Ascending aorta (tissue), 2 donors: ENCODE measurements at regions of chr19 and their contacts with region 1.

Region 1: DNA sequence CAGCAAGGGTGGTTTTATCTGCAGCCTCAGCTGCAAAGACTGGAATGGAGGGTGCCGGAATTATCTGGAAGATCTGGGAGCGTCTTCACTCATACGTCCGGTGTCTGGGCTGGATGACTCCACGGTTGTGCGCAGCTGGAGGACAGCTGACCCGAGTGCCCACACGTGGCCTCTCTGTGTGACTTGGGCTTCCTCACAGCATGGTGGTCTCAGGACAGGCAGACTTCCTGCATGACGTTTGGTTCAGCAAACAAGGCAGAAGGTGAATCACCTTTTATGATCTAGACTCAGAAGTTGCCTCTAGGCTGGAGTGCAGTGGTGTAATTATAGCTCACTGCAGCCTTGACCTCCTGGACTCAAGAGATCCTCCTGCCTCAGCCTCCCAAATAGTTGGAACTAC is 33.2 kb downstream of the CACNG6 start:
- DNase-seq: no peak
- H3K4me3 ChIP-seq: no peak overlapping the region
- H3K27ac ChIP-seq: no peak overlapping the region
- H3K4me1 ChIP-seq: no peaks in the 10 kb centered on the region
- H3K27me3 ChIP-seq: no peaks in the 10 kb centered on the region
- CTCF ChIP-seq: no peak

Region 2: GRCh38 chr19:53844849-53845246 is 179.8 kb before region 1 on chr19:
- intact Hi-C with region 1: loop called (anchors 1 kb)
- DNase-seq: no peak
- H3K4me3 ChIP-seq: no peak overlapping the region
- H3K27ac ChIP-seq: no peak overlapping the region
- H3K4me1 ChIP-seq: peaks cover 2 to 4% of the 10 kb centered on the region in 2 donors
- H3K27me3 ChIP-seq: no peaks in the 10 kb centered on the region
- CTCF ChIP-seq: no peak

Region 3: GRCh38 chr19:54229146-54229545 is 204.5 kb after region 1 on chr19:
- intact Hi-C with region 1: no loop called
- DNase-seq: no peak
- H3K4me3 ChIP-seq: no peak overlapping the region
- H3K27ac ChIP-seq: no peak overlapping the region
- H3K4me1 ChIP-seq: no peaks in the 10 kb centered on the region
- H3K27me3 ChIP-seq: peaks cover 3% of the 10 kb centered on the region
- CTCF ChIP-seq: no peak